HepG2 (cell line): ENCODE measurements at regions of chr12 and their contacts with region 1.

Region 1: GRCh38 chr12:112382232-112382796 is at the start of gene HECTD4:
- DNase-seq: peak; percentile 82
- ATAC-seq: peak; percentile 96
- H3K4me3 ChIP-seq: peak within 1 kb of the TSS; percentile 80 to 90 (median 87)
- H3K27ac ChIP-seq: peak within 1 kb of the TSS; percentile 68
- H3K4me1 ChIP-seq: peaks cover 32% of the 10 kb centered on the region
- H3K27me3 ChIP-seq: no peaks in the 10 kb centered on the region; a peak in 1 of 5 replicates
- CTCF ChIP-seq: no peak
- EP300 ChIP-seq: no peak
- POLR2A ChIP-seq: peak; percentile 63 to 96
- RAD21 ChIP-seq: no peak
- total RNA-seq, gene HECTD4: 11.4 and 13.7 TPM in 2 replicates

Region 2: DNA sequence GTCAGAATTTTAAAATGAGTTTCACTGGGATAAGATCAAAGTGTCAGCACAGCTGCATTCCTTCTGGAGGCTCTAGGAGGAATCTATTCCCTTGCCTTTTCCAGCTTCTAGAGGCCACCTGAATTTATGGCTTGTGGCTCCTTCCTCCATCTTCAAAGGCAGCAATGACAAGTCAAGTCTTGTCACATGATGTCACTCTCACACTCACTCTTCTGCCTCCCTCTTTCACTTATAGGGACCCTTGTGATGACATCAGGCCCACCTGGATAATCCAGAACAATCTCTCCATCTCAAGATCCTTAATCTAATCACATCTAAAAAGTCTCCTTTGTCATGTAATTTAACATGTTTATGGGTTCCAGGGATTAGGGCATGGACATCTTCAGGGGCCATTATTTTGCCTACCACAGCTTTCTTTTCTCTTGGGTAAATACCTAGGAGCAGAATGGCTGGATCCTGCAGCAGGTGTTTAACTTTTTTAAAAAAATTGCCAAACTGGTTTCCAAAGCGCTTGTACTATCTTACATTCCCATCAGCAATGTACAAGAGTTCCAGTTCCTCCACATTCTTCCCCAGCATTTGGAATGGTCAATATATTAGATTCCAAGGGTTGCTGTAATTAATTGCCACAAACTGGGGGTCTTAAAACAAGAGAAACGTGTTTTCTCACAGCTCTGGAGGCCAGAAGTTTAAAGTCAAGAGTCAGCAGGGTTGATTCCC is 1434.4 kb before region 1 on chr12:
- CTCF ChIA-PET with region 1: no interaction called
- POLR2A ChIA-PET with region 1: no interaction called
- in situ Hi-C with region 1: no loop called
- intact Hi-C with region 1: no loop called
- DNase-seq: no peak
- ATAC-seq: no peak
- H3K4me3 ChIP-seq: no peak overlapping the region
- H3K27ac ChIP-seq: no peak overlapping the region
- H3K4me1 ChIP-seq: no peaks in the 10 kb centered on the region
- H3K27me3 ChIP-seq: no peaks in the 10 kb centered on the region
- CTCF ChIP-seq: no peak
- EP300 ChIP-seq: no peak
- POLR2A ChIP-seq: no peak
- RAD21 ChIP-seq: no peak

Region 3: DNA sequence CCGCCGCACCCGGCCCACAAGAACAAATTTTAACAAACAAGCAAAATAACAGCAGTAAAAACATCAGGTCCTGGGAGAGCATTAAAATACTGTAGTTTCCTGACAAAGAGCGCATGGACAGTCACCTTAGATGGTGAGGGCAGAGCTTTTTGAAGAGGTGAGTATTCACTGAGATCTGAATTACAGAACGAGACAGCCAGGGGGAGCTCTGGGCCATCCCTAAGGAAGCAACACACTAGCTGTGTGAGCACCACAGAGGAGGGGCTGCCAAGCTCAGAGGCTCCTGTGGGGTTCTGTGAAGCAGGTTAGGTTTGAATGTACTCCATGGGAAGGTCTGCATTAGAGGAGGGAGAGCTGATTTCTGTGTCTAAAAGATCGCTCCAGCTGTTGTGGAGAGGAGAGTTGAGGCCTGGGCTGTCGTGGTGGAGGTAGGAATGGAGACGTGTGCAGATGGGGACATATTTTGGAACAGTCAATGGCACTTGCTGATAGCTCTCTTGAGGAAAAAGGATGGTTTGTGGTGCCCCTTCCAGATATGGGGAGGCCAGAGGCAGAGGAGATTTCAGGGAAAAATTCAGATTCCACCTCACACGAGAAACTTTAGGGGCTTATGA is 184.1 kb before region 1 on chr12:
- CTCF ChIA-PET with region 1: interaction called, 28 read pairs
- POLR2A ChIA-PET with region 1: interaction called, 9 read pairs
- in situ Hi-C with region 1: loop called (anchors 5 kb)
- intact Hi-C with region 1: loop called (anchors 1 kb)
- DNase-seq: peak; percentile 64
- ATAC-seq: peak; percentile 100
- H3K4me3 ChIP-seq: no peak overlapping the region
- H3K27ac ChIP-seq: no peak overlapping the region
- H3K4me1 ChIP-seq: no peaks in the 10 kb centered on the region
- H3K27me3 ChIP-seq: no peaks in the 10 kb centered on the region
- CTCF ChIP-seq: peak; percentile 84
- EP300 ChIP-seq: no peak
- POLR2A ChIP-seq: no peak
- RAD21 ChIP-seq: peak; percentile 67

Region 4: DNA sequence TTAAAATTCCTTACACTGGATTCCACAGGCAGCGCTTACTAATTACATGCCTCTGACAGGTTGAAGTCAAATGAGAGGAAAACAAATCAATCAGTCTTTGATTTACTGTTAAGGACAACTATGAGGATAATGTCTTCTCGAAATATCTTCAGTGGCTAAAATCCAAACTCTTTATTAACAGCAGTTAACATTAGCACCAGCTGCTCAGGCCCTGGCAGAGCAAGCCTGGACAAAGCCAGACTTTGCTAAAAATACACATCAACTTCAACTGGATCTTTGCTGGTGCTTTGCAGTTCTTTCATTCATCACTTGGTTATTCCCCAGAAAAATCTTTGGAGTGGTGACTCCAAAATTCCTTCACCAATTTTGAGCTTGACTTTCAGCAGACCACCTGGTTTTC is 98.8 kb before region 1 on chr12:
- CTCF ChIA-PET with region 1: no interaction called
- POLR2A ChIA-PET with region 1: no interaction called
- in situ Hi-C with region 1: no loop called
- intact Hi-C with region 1: loop called (anchors 10 kb)
- DNase-seq: no peak
- ATAC-seq: no peak
- H3K4me3 ChIP-seq: no peak overlapping the region
- H3K27ac ChIP-seq: no peak overlapping the region
- H3K4me1 ChIP-seq: peaks cover 21% of the 10 kb centered on the region
- H3K27me3 ChIP-seq: 0 out of 5 replicates have a peak, but pooled peaks cover 0 to 3% of the 10 kb centered on the region in 2 experiments
- CTCF ChIP-seq: no peak
- EP300 ChIP-seq: no peak
- POLR2A ChIP-seq: no peak
- RAD21 ChIP-seq: no peak

Region 5: DNA sequence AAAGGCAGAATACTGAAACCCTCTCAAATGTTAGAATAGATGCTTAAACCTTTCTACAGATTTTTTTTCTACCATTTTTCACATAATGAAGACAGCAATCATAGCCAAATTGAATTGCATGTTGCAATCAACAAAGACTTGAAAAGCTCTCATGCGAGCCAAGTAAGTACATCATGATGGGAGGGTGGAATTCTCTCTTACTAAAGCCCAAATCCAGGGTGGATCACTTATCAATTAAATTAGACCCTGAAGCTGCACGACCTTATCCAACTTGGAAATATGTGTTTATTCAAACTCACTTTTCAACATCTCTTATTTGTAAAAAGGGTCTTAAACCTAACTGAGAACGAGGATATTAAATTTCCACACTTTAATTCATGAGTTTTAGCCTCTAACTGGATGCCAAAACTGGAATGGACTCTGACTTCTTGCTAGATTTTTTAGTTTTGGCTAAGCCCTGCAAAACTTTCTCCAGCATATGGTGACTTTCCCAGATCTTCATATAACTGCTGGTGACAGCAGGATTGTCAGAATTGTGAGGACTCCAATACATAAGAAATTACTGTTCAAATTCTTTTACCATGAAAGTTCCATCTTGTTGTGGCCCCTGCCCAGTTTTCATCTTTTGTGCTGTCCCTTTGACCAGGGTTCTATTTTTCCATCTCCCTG is 53.7 kb before region 1 on chr12:
- CTCF ChIA-PET with region 1: no interaction called
- POLR2A ChIA-PET with region 1: no interaction called
- in situ Hi-C with region 1: no loop called
- intact Hi-C with region 1: loop called (anchors 10 kb)
- DNase-seq: no peak
- ATAC-seq: no peak
- H3K4me3 ChIP-seq: no peak overlapping the region
- H3K27ac ChIP-seq: no peak overlapping the region
- H3K4me1 ChIP-seq: peaks cover 25% of the 10 kb centered on the region
- H3K27me3 ChIP-seq: no peaks in the 10 kb centered on the region
- CTCF ChIP-seq: no peak
- EP300 ChIP-seq: no peak
- POLR2A ChIP-seq: no peak
- RAD21 ChIP-seq: no peak

Region 6: GRCh38 chr12:112463478-112463877 is 81.2 kb after region 1 on chr12:
- CTCF ChIA-PET with region 1: no interaction called
- POLR2A ChIA-PET with region 1: no interaction called
- in situ Hi-C with region 1: no loop called
- intact Hi-C with region 1: no loop called
- DNase-seq: no peak
- ATAC-seq: no peak
- H3K4me3 ChIP-seq: no peak overlapping the region
- H3K27ac ChIP-seq: no peak overlapping the region
- H3K4me1 ChIP-seq: peaks cover 22% of the 10 kb centered on the region
- H3K27me3 ChIP-seq: no peaks in the 10 kb centered on the region
- CTCF ChIP-seq: no peak
- EP300 ChIP-seq: no peak
- POLR2A ChIP-seq: no peak
- RAD21 ChIP-seq: no peak

Region 7: GRCh38 chr12:112506513-112507166 is 124.3 kb after region 1 on chr12:
- CTCF ChIA-PET with region 1: no interaction called
- POLR2A ChIA-PET with region 1: no interaction called
- in situ Hi-C with region 1: no loop called
- intact Hi-C with region 1: no loop called
- DNase-seq: no peak
- ATAC-seq: no peak
- H3K4me3 ChIP-seq: no peak overlapping the region
- H3K27ac ChIP-seq: no peak overlapping the region
- H3K4me1 ChIP-seq: no peaks in the 10 kb centered on the region
- H3K27me3 ChIP-seq: no peaks in the 10 kb centered on the region
- CTCF ChIP-seq: no peak
- EP300 ChIP-seq: no peak
- POLR2A ChIP-seq: no peak
- RAD21 ChIP-seq: no peak